Naive thymus-derived CD4-positive, alpha-beta T cell (primary cell): ENCODE measurements at regions of chr17 and their contacts with region 1.

Region 1: GRCh38 chr17:81860756-81861518 is 602 bp upstream of the P4HB start:
- DNase-seq: peak; percentile 98 to 100 (median 100)
- ATAC-seq: peak; percentile 91
- H3K4me3 ChIP-seq: peak overlapping the region; percentile 83
- H3K4me3 Mint-ChIP-seq: peak overlapping the region; percentile 81 to 99 (median 90)
- H3K27ac ChIP-seq: peak overlapping the region; percentile 95
- H3K27ac Mint-ChIP-seq: peak overlapping the region; percentile 89 to 100 (median 98)
- H3K4me1 ChIP-seq: peaks cover 20 to 27% of the 10 kb centered on the region in 2 donors
- H3K4me1 Mint-ChIP-seq: peaks cover 19 to 53% (median 43%) of the 10 kb centered on the region in 7 donors
- H3K27me3 ChIP-seq: no peaks in the 10 kb centered on the region
- H3K27me3 Mint-ChIP-seq: peaks cover 0 to 5% (median 0%) of the 10 kb centered on the region in 5 donors

Region 2: GRCh38 chr17:81553018-81553615 is 307.8 kb before region 1 on chr17:
- CTCF ChIA-PET with region 1: no interaction called
- POLR2A ChIA-PET with region 1: no interaction called
- intact Hi-C with region 1: loop called in 1 of 2 experiments (anchors 1 kb)
- DNase-seq: peak; percentile 34 to 83 (median 75)
- ATAC-seq: peak; percentile 77
- H3K4me3 ChIP-seq: peak overlapping the region; percentile 77
- H3K4me3 Mint-ChIP-seq: peak overlapping the region; percentile 88 to 93 (median 90)
- H3K27ac ChIP-seq: peak overlapping the region; percentile 95
- H3K27ac Mint-ChIP-seq: peak overlapping the region; percentile 69 to 95 (median 92)
- H3K4me1 ChIP-seq: peaks cover 17% of the 10 kb centered on the region in 2 donors
- H3K4me1 Mint-ChIP-seq: peaks cover 16 to 41% (median 36%) of the 10 kb centered on the region in 7 donors
- H3K27me3 ChIP-seq: no peaks in the 10 kb centered on the region
- H3K27me3 Mint-ChIP-seq: no peaks in the 10 kb centered on the region

Region 3: GRCh38 chr17:81711814-81712467 is 149.0 kb before region 1 on chr17 and contains the start of gene SLC25A10:
- CTCF ChIA-PET with region 1: no interaction called
- POLR2A ChIA-PET with region 1: interaction called, 3 read pairs
- intact Hi-C with region 1: loop called (anchors 1 to 2 kb)
- DNase-seq: peak; percentile 65 to 89 (median 78)
- ATAC-seq: peak; percentile 94
- H3K4me3 ChIP-seq: peak within 1 kb of the TSS; percentile 24
- H3K4me3 Mint-ChIP-seq: peak within 1 kb of the TSS; percentile 80 to 90 (median 86)
- H3K27ac ChIP-seq: peak within 1 kb of the TSS; percentile 55
- H3K27ac Mint-ChIP-seq: peak within 1 kb of the TSS; percentile 32 to 86 (median 75)
- H3K4me1 ChIP-seq: peaks cover 13% of the 10 kb centered on the region in 2 donors
- H3K4me1 Mint-ChIP-seq: peaks cover 9 to 23% (median 18%) of the 10 kb centered on the region in 7 donors
- H3K27me3 ChIP-seq: no peaks in the 10 kb centered on the region
- H3K27me3 Mint-ChIP-seq: no peaks in the 10 kb centered on the region
- total RNA-seq, gene SLC25A10: 4.0 to 27.4 (median 6.2) TPM

Region 4: DNA sequence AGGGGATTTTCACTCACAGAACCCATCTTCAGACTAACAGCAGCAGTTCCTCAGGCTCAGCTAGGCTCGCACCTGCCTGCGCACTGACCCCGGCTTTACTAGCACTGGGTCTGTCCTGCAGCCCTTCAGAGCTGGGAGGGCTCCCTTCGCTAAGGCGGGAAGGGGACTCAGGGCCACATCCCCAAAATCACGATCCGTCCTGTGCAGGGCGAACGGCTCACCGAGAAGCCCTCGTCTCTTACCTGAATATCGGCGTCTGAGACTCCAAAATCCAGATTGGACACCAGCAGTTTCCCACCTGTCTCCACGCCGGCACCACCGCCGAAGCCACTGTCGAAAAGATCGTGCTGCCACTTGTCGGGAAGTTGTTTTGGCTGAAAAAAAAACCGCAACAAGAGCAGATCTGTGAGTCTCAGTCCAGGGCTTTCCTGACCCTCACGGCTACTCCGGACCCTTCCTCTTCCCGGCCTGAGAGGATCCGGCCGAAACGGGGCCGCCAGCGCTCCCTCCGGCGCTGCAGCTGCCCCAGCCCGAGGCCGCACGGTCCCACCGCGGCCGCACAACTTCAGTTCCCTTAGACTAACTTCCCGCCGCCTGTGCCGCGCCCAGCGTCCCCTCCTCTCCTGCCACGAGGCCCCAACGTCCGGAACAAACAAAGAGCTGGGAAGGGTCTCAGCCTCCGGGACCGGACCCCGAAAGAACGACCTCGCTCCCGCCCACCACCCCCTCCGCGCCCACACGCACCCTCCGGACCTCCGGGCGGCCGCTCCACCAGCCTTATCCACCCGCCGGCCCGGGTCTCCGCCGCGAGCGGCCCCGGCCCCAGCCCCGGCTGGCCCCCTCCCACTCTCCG is 29.7 kb after region 1 on chr17:
- CTCF ChIA-PET with region 1: no interaction called
- POLR2A ChIA-PET with region 1: interaction called, 3 read pairs
- intact Hi-C with region 1: loop called (anchors 1 kb)
- DNase-seq: peak in 1 of 9 donors; percentile 47
- ATAC-seq: no peak
- H3K4me3 ChIP-seq: peak overlapping the region; percentile 79
- H3K4me3 Mint-ChIP-seq: peak overlapping the region; percentile 78 to 96 (median 87)
- H3K27ac ChIP-seq: peak overlapping the region; percentile 82
- H3K27ac Mint-ChIP-seq: peak overlapping the region; percentile 84 to 97 (median 95)
- H3K4me1 ChIP-seq: peaks cover 16 to 20% of the 10 kb centered on the region in 2 donors
- H3K4me1 Mint-ChIP-seq: peaks cover 0 to 32% (median 19%) of the 10 kb centered on the region in 7 donors
- H3K27me3 ChIP-seq: no peaks in the 10 kb centered on the region
- H3K27me3 Mint-ChIP-seq: no peaks in the 10 kb centered on the region

Region 5: DNA sequence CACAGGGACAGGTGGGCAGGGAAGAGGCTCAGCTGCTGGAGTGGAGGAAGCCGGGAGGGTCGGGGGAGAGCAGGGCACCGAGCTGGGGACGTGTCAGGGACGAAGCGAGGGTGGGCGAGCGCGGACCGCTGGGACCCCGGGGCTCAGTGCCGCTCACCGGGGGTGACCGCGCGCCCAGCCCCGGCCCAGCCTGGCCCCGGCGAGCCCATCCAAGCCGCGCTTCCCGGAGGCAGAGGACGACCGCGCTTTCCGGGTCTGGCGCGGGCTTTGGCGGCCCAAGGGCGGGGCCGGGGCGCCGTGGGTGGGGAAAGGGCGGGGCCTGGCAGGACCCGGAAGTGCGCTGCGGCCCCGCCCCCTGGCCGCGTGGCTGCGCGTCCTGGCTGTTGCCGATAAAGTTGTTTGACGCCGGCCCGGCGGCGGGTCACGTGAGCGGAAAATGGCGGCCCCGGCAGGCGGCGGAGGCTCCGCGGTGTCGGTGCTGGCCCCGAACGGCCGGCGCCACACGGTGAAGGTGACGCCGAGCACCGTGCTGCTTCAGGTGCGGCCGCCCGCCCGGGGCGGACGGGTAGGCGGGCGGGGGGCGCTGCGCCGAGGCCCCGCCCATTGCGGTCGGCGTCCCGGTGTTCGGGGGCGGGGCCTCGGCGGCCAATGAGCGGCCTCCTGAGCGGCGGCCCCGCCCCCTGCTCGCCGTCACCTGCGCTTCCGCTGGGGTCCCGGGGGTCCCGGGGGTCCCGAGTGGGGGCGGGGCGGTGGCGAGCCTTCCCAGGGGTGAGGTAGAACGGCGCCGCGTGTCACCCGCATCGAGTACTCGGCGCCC is 116.5 kb after region 1 on chr17 and contains the start of gene ASPSCR1:
- CTCF ChIA-PET with region 1: no interaction called
- POLR2A ChIA-PET with region 1: no interaction called
- intact Hi-C with region 1: loop called in 1 of 2 experiments (anchors 2 kb)
- DNase-seq: peak; percentile 86 to 96 (median 93)
- ATAC-seq: peak; percentile 98
- H3K4me3 ChIP-seq: peak within 1 kb of the TSS; percentile 79
- H3K4me3 Mint-ChIP-seq: peak within 1 kb of the TSS; percentile 93 to 99 (median 96)
- H3K27ac ChIP-seq: peak within 1 kb of the TSS; percentile 90
- H3K27ac Mint-ChIP-seq: peak within 1 kb of the TSS; percentile 94 to 99 (median 97)
- H3K4me1 ChIP-seq: peaks cover 16 to 19% of the 10 kb centered on the region in 2 donors
- H3K4me1 Mint-ChIP-seq: peaks cover 26 to 51% (median 38%) of the 10 kb centered on the region in 7 donors
- H3K27me3 ChIP-seq: no peaks in the 10 kb centered on the region
- H3K27me3 Mint-ChIP-seq: peaks cover 0 to 7% (median 0%) of the 10 kb centered on the region in 5 donors
- total RNA-seq, gene ASPSCR1: 36.4 to 46.7 (median 46.0) TPM